ENCODE measurements at regions of chr6 and their contacts with region 1.

Region 1: DNA sequence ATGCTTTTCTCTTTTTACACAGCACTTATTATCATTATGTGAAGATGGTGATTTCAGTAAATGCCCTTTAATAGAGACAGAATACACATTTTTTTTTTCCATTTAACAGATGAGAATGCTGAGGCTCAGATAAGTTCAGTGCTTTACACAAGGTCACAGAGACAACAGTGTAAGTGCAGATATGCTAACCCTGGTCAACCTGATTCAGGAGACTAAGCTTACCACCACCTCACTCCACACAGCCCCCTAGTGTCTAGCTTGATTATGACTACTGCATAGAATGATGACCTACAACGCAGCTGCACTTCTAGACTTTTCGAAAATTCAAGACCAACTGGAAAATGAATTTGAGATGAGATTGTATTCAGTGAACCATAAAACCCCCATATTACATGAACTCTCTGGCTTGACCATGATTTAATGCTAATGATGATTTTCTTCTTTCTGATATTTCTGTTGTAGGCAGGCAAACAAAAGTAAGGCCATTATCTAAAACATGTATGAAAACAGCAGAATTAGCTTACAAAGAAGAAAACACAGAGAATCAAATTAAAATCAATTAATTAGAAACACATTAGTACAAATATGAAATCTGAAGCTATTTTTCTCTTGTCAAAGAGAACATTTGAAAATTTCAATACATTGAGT is 212.1 kb upstream of the PHACTR1 start:
- DNase-seq: peak; percentile 32
- CTCF ChIP-seq: peak; percentile 36

Region 2: GRCh38 chr6:12467706-12468670 is 36.5 kb before region 1 on chr6:
- CTCF ChIA-PET with region 1: no interaction called
- POLR2A ChIA-PET with region 1: no interaction called
- DNase-seq: no peak
- CTCF ChIP-seq: no peak

Region 3: DNA sequence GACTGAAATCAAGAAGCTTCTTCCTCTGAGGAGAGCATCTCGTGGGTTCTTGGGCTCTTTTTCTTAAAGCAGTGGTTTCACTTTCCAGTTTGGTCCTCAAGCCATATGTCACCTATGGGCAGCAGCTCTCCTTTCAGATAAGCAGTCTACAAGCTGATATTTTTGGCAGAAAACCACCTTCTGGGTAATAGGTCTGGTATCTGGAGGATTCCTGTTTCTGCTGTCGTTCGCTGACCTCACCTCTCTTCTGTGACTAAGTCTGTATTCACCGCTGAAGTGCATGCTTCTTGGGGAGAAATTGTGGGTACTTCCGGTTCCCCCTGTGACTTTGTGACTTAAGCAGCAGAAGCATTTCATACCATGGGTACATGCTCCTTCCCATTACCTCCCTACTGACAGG is 20.7 kb before region 1 on chr6:
- CTCF ChIA-PET with region 1: interaction called, 21 read pairs
- POLR2A ChIA-PET with region 1: no interaction called
- DNase-seq: peak; percentile 24
- CTCF ChIP-seq: no peak

Region 4: GRCh38 chr6:12490904-12491571 is 13.4 kb before region 1 on chr6:
- CTCF ChIA-PET with region 1: interaction called, 10 read pairs
- POLR2A ChIA-PET with region 1: no interaction called
- DNase-seq: no peak
- CTCF ChIP-seq: no peak

Region 5: GRCh38 chr6:12516070-12516469 is 11.6 kb after region 1 on chr6:
- CTCF ChIA-PET with region 1: interaction called, 27 read pairs
- POLR2A ChIA-PET with region 1: no interaction called
- DNase-seq: peak; percentile 39
- CTCF ChIP-seq: no peak

Measured in GM10248 (cell line).